OCI-LY7 (cell line): ENCODE measurements at regions of chr1 and their contacts with region 1.

Region 1: GRCh38 chr1:4825800-4826450 is 171.5 kb downstream of the AJAP1 start:
- DNase-seq: peak; percentile 72
- H3K4me3 ChIP-seq: no peak overlapping the region
- H3K27ac ChIP-seq: no peak overlapping the region
- H3K4me1 ChIP-seq: peaks cover 14% of the 10 kb centered on the region
- CTCF ChIP-seq: peak; percentile 89

Region 2: GRCh38 chr1:4778056-4778455 is 47.9 kb before region 1 on chr1:
- CTCF ChIA-PET with region 1: interaction called, 3 read pairs
- POLR2A ChIA-PET with region 1: no interaction called
- intact Hi-C with region 1: loop called (anchors 1 kb)
- DNase-seq: peak; percentile 46
- H3K4me3 ChIP-seq: no peak overlapping the region
- H3K27ac ChIP-seq: no peak overlapping the region
- H3K4me1 ChIP-seq: peaks cover 5% of the 10 kb centered on the region
- CTCF ChIP-seq: peak; percentile 75